CD4-positive, alpha-beta memory T cell (primary cell): ENCODE measurements at regions of chr15 and their contacts with region 1.

Region 1: DNA sequence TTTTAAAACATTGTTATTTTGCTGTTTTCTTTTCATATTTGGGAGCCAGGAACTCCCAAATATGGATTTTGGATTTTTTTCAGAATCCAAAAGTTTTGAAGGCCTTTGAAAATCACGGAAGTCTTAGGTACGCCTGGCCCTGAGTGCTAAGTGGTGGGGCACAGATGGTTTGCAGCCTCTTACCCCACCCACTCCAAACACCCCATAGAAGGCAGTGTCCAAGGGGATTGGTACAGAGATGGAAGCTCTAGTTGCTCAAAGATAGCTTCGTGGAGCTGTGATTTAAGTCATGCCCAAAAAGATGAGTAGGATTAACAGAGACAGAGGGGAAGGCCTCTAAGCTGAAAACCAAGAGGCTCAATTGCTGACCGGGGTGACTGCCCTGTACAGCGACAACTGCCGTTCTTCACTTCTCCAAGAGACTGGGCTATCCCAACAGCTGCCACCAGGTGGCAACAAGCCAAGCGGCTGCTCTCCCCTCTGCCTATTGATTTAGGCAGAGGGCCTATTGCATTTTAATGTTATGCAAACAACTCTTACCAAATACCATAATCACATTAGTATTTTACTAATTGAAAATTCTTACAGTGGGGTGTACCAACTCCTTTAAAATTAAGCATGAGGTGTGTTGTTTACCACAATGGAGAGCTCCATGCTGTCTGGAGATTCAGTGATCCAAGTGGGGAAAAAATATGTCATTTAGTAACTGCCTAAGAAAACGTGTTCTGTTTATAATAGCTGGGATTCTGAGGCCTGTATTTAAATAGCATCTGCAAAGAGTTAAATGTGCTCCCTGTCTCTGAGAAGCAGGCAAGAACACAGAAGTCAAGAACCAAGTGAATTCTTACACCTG is 64.0 kb upstream of the C15orf61 start:
- DNase-seq: peak; percentile 69 to 75 (median 72)
- H3K4me3 ChIP-seq: no peak overlapping the region
- H3K4me3 Mint-ChIP-seq: peak overlapping the region in 2 of 8 donors; percentile 20 to 26
- H3K27ac ChIP-seq: no peak overlapping the region
- H3K27ac Mint-ChIP-seq: no peak overlapping the region
- H3K4me1 ChIP-seq: no peaks in the 10 kb centered on the region
- H3K4me1 Mint-ChIP-seq: peaks cover 0 to 1% (median 0%) of the 10 kb centered on the region in 4 donors
- H3K27me3 ChIP-seq: no peaks in the 10 kb centered on the region
- H3K27me3 Mint-ChIP-seq: peaks cover 0 to 2% of the 10 kb centered on the region in 2 donors

Region 2: GRCh38 chr15:66894986-66895780 is 561.7 kb before region 1 on chr15:
- CTCF ChIA-PET with region 1: no interaction called
- POLR2A ChIA-PET with region 1: no interaction called
- intact Hi-C with region 1: no loop called
- DNase-seq: no peak
- H3K4me3 ChIP-seq: no peak overlapping the region
- H3K4me3 Mint-ChIP-seq: no peak overlapping the region
- H3K27ac ChIP-seq: no peak overlapping the region
- H3K27ac Mint-ChIP-seq: no peak overlapping the region
- H3K4me1 ChIP-seq: no peaks in the 10 kb centered on the region
- H3K4me1 Mint-ChIP-seq: no peaks in the 10 kb centered on the region
- H3K27me3 ChIP-seq: no peaks in the 10 kb centered on the region
- H3K27me3 Mint-ChIP-seq: peaks cover 6 to 11% of the 10 kb centered on the region in 2 donors

Region 3: DNA sequence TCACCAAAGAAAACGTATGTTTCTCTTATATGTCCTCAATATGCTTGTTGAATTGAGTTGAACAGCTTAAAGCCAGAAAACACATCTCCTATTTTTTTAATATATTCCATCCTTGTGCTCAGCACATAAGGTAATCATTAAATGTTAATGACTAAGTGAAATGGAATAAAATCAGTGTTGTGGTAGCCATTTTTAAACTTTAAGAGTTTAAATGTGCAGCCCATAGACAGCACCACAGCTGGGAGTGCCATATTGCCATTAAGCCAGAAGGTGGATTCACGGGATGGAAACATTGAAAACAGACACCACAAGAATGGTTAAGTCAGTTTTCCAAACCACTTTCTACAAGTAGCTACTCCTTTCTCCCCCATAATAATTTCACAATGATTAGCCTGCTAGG is 12.8 kb before region 1 on chr15:
- CTCF ChIA-PET with region 1: interaction called, 10 read pairs
- POLR2A ChIA-PET with region 1: no interaction called
- intact Hi-C with region 1: no loop called
- DNase-seq: no peak
- H3K4me3 ChIP-seq: no peak overlapping the region
- H3K4me3 Mint-ChIP-seq: no peak overlapping the region
- H3K27ac ChIP-seq: no peak overlapping the region
- H3K27ac Mint-ChIP-seq: no peak overlapping the region
- H3K4me1 ChIP-seq: no peaks in the 10 kb centered on the region
- H3K4me1 Mint-ChIP-seq: no peaks in the 10 kb centered on the region
- H3K27me3 ChIP-seq: no peaks in the 10 kb centered on the region
- H3K27me3 Mint-ChIP-seq: no peaks in the 10 kb centered on the region

Region 4: GRCh38 chr15:67468416-67468815 is 11.5 kb after region 1 on chr15:
- CTCF ChIA-PET with region 1: interaction called, 31 read pairs
- POLR2A ChIA-PET with region 1: no interaction called
- intact Hi-C with region 1: no loop called
- DNase-seq: no peak
- H3K4me3 ChIP-seq: no peak overlapping the region
- H3K4me3 Mint-ChIP-seq: no peak overlapping the region
- H3K27ac ChIP-seq: no peak overlapping the region
- H3K27ac Mint-ChIP-seq: no peak overlapping the region
- H3K4me1 ChIP-seq: no peaks in the 10 kb centered on the region
- H3K4me1 Mint-ChIP-seq: no peaks in the 10 kb centered on the region
- H3K27me3 ChIP-seq: no peaks in the 10 kb centered on the region
- H3K27me3 Mint-ChIP-seq: no peaks in the 10 kb centered on the region